ENCODE measurements at regions of chr6 and their contacts with region 1.

Region 1: DNA sequence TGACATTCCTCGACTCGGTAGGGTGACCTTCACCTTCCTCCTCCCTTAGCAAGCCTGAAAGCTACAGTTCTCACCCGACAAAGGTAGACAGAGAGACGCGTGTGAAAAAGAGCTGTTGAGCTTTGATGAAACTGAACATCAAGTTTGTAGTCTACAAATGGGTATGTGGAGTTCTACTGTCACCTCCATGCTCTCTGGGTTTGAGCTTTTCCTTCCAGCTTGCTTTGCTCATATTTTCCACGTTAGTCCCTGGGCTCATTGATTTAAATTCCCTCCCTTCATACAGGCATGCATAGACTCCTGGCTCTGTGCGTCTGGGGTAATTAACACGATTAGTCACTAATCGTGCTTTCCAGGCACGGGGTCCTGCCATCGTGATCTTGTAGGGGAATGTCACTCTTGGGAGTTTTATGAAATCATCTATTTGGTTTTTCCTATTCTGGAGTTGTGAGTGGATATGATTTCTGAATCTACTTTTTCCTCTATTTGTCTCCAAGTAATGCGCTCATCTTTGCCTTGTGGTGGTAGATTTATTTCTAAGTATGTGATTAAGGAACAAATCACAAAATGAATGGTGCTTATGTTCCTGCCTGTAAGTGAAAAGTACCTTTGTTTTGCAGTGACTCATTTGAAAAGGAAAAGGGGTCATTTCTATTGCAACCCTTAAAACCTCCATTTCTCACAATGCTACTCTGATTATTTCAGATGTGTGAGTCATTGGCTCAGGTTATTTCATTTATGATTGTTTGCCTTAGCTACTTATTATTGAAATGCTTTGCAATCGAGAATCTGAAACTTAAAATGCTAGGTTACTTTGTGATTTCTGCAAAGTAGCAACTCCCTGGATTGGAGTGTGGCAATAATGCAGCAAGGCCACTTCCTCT is 154.6 kb downstream of the ZDHHC14 start:
- DNase-seq: peak; percentile 22
- H3K4me3 Mint-ChIP-seq: peak overlapping the region; percentile 0
- H3K27ac Mint-ChIP-seq: peak overlapping the region; percentile 75
- H3K4me1 Mint-ChIP-seq: peaks cover 43% of the 10 kb centered on the region
- H3K27me3 Mint-ChIP-seq: peaks cover 5% of the 10 kb centered on the region

Region 2: DNA sequence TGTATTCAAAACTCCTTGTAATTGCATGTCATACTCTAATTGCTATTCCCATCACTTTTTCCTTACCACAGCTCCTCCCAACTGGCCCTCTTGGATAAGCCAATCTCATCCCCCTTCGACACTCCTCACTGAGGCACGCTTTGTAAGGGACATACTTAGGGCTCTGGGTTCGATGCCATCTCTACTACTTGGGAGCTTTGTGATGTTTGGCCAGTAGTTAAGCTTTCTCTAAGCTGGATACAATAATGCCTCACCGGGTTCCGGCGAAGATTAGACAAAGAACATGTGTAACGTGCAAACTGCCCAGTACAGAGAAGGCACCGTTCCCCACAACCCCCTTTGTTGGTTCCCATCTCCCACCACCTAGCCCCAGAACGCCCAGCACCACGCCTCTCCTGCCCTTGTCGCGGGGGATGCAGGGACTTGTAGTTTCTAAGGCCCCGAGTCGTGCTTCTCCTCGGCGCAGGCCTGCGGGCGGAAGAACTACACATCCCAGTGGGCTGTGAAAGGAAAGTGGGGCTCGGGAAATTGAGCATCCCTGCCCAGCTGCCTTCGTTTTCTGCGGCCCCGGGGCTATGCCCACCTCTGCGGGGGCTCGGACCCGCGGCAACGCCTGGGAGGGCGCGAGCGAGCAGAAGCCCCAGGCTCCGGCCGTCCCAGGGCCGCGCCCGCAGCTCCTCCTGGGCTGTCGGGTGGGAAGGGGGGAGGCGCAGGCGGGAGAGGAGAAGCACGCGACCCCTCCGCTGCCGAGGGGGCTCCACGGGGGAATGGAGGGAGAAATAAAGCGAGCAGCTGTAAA is 155.7 kb before region 1 on chr6:
- intact Hi-C with region 1: loop called (anchors 5 kb)
- DNase-seq: peak; percentile 84
- H3K4me3 Mint-ChIP-seq: peak overlapping the region; percentile 74
- H3K27ac Mint-ChIP-seq: peak overlapping the region; percentile 59
- H3K4me1 Mint-ChIP-seq: peaks cover 29% of the 10 kb centered on the region
- H3K27me3 Mint-ChIP-seq: peaks cover 14% of the 10 kb centered on the region

Region 3: DNA sequence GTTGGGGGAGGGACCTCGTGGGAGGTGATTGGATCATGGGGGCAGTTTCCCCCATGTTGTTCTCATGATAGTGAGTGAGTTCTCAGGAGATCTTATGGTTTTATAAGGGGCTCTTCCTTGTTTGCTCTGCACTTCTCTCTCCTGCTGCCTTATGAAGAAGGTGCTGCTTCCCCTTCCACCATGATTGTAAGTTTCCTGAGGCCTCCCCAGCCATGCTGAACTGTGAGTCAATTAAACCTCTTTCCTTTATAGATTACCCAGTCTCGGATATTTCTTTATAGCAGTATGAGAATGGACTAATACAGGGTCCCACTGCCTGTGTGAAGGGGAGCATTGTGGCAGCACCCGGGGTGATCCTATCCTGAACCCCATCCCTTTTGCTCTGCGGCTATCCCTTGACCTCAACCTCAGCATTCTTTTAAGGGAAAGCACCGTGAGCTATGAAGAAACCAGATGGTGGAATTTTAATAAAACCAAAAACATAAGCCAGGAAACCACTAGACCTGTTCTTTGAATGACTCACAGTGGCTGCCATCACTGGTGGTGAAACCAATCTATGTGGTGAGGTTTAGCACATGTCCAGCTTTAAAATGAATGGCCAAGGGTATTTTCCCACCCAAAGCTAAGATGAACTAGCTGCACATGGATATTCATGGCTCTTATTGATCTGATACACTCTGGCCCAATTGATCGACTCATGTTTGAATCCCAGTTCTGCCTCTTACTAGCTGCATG is 92.3 kb before region 1 on chr6:
- intact Hi-C with region 1: loop called (anchors 1 kb)
- DNase-seq: no peak
- H3K4me3 Mint-ChIP-seq: no peak overlapping the region
- H3K27ac Mint-ChIP-seq: peak overlapping the region; percentile 87
- H3K4me1 Mint-ChIP-seq: peaks cover 25% of the 10 kb centered on the region
- H3K27me3 Mint-ChIP-seq: no peaks in the 10 kb centered on the region

Region 4: DNA sequence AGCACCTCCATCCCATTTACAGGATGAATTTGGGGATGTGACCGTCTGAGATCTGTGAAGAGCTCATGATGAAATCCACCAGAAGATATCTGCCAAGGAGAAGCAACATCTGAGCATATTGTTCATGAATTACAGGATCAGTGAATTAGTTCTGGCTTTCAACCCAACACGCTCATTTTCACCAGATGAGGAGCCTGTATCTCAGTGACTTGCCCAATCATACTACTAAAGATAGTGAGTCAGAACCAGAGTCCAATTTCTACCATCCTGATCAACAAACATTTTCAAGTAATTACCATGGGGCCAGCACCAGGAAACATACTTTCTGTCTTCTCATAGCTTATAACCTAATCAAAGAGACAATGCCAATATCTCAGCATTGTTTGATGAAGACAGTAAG is 38.0 kb before region 1 on chr6:
- intact Hi-C with region 1: loop called (anchors 5 kb)
- DNase-seq: no peak
- H3K4me3 Mint-ChIP-seq: no peak overlapping the region
- H3K27ac Mint-ChIP-seq: peak overlapping the region; percentile 4
- H3K4me1 Mint-ChIP-seq: peaks cover 30% of the 10 kb centered on the region
- H3K27me3 Mint-ChIP-seq: peaks cover 2% of the 10 kb centered on the region

Region 5: DNA sequence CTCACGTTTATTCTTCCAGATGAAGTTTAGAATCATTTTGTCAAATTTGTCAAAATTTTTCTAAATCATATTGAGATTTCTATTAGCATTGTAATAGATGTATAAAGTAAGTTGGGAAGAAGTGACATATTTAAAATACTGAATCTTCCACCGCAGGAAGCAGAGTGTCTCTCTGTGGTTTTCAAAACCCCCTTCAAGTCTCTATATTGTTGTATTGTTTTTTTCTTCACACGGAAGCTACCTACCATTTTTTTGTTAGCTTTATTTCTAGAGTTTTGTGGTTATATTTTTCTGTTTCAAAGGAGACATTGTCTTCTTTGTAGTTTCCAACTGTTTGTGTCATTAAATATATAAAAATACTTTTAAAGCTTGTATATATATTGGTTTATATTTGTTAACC is 34.0 kb after region 1 on chr6:
- intact Hi-C with region 1: loop called (anchors 2 kb)
- DNase-seq: no peak
- H3K4me3 Mint-ChIP-seq: no peak overlapping the region
- H3K27ac Mint-ChIP-seq: peak overlapping the region; percentile 28
- H3K4me1 Mint-ChIP-seq: peaks cover 22% of the 10 kb centered on the region
- H3K27me3 Mint-ChIP-seq: peaks cover 2% of the 10 kb centered on the region

Region 6: GRCh38 chr6:157579467-157580031 is 44.0 kb after region 1 on chr6:
- intact Hi-C with region 1: no loop called
- DNase-seq: no peak
- H3K4me3 Mint-ChIP-seq: no peak overlapping the region
- H3K27ac Mint-ChIP-seq: no peak overlapping the region
- H3K4me1 Mint-ChIP-seq: peaks cover 3% of the 10 kb centered on the region
- H3K27me3 Mint-ChIP-seq: peaks cover 5% of the 10 kb centered on the region